H1 (cell line): ENCODE measurements at regions of chr14 and their contacts with region 1.

Region 1: DNA sequence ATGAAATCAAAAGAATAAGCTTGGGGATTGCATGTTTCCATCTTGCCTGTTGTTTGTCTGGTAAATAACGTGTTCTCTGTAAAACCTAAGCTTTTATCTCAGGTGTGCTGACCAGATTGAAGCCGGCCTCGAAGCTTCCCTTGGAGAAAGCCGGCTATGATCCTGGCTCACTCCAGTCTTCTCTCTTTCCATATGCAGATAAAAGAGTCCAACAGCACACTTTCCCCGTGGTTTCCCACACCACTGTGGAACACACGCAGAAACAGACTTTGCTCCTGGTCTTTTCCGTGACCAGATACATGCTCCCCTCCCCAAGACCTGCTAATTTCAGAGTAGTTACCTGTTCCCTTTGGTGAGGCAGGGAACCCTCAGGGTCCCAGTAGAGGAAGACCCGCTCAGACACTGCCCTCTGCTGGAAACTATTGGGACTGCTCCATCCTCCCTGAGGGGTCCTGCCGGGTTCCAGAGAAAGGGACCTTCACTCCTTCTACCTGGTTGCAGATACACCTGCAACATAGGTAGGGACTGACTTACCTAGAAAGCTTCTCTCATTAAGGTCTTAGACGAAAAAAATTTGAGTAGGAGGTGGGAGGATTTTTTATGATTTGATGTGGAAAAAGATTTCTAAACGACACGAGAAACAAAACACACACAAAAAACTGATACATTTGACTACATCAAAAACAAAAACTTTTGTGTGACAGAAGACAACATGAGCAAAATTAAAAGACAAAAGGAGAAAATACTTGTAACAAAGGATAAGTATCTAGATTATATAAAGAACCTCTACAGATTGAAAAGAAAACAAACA is 415.5 kb upstream of the CCDC196 start:
- DNase-seq: peak; percentile 58 to 97
- H3K4me3 ChIP-seq: no peak overlapping the region
- H3K27ac ChIP-seq: no peak overlapping the region
- H3K4me1 ChIP-seq: no peaks in the 10 kb centered on the region
- H3K27me3 ChIP-seq: no peaks in the 10 kb centered on the region
- CTCF ChIP-seq: peak; percentile 80 to 89 (median 86)
- EP300 ChIP-seq: no peak
- POLR2A ChIP-seq: no peak
- RAD21 ChIP-seq: peak; percentile 95 to 96

Region 2: DNA sequence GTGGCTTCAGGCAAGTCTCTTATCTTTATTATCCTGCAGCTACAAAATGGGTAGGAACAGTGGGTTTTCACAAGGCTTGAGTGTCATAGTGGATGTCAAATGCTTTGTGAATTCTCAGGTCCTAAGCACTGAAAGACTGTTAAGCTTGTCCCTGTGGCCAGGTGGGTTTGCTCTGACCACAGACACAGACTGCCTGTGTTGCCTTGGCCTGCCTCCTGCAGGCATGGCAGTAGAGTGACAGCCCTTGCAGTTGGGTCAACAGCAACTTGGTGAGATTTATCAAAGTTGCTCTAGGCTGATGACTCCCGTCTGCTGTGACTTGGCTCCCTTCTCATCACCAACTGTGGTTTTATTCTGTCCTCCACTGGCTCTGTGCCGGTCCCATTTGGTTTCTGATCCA is 104.5 kb before region 1 on chr14:
- CTCF ChIA-PET with region 1: interaction called, 56 read pairs
- POLR2A ChIA-PET with region 1: no interaction called
- DNase-seq: no peak
- H3K4me3 ChIP-seq: no peak overlapping the region
- H3K27ac ChIP-seq: no peak overlapping the region
- H3K4me1 ChIP-seq: peaks cover 0 to 4% (median 0%) of the 10 kb centered on the region in 4 experiments; a peak in 1 of 7 replicates
- H3K27me3 ChIP-seq: no peaks in the 10 kb centered on the region
- CTCF ChIP-seq: peak; percentile 39 to 66 (median 59); a peak in 3 of 4 replicates
- EP300 ChIP-seq: no peak
- POLR2A ChIP-seq: no peak
- RAD21 ChIP-seq: peak; percentile 59 to 68

Region 3: DNA sequence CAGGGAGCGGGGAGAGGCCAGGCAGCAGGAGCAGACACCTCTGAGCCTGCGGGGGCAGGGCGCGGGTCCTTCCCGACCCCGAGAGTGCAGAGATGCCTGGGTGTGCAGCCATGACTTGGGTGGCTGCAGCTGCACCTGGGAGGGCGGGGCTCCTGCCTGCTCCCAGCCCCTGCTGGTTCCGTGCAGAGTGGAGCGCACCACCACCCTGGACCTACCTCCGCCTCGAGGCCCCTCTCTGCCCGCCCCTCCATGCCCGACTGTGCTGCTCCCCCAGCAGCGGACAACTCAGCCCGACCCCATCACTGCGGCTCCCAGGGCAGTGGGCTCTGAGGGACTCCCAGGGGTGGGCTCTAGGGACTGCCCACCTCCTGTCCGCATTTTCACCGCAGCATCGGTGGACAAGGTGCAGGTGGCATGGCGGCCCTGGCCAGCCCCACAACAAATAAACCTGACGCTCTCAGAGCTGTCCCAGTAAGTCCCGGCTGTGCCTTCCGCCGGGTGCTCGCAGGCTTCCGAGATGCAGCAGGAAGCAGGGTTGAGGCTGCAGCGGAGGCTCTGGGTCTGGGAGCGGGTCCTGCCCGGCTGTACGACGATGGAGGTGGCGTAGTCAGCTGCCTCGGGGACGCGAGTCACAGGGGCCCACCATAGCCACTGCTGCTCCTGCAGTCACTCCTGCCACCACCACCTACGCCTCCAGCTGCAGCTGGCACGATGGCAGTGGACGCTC is 23.4 kb after region 1 on chr14:
- CTCF ChIA-PET with region 1: interaction called, 12 read pairs
- POLR2A ChIA-PET with region 1: no interaction called
- DNase-seq: no peak
- H3K4me3 ChIP-seq: no peak overlapping the region
- H3K27ac ChIP-seq: no peak overlapping the region
- H3K4me1 ChIP-seq: no peaks in the 10 kb centered on the region; a peak in 1 of 7 replicates
- H3K27me3 ChIP-seq: no peaks in the 10 kb centered on the region
- CTCF ChIP-seq: no peak
- EP300 ChIP-seq: no peak
- POLR2A ChIP-seq: no peak
- RAD21 ChIP-seq: no peak